Activated CD4-positive, alpha-beta memory T cell treated with anti-CD3 and anti-CD28 coated beads for 36 hours (primary cell): ENCODE measurements at regions of chr5 and their contacts with region 1.

Region 1: GRCh38 chr5:74974451-74975091 is 77.8 kb downstream of the GCNT4 start:
- DNase-seq: peak; percentile 53
- H3K4me3 Mint-ChIP-seq: peak overlapping the region; percentile 7
- H3K27ac Mint-ChIP-seq: peak overlapping the region; percentile 82
- H3K4me1 Mint-ChIP-seq: peaks cover 27% of the 10 kb centered on the region
- H3K27me3 Mint-ChIP-seq: peaks cover 1% of the 10 kb centered on the region

Region 2: DNA sequence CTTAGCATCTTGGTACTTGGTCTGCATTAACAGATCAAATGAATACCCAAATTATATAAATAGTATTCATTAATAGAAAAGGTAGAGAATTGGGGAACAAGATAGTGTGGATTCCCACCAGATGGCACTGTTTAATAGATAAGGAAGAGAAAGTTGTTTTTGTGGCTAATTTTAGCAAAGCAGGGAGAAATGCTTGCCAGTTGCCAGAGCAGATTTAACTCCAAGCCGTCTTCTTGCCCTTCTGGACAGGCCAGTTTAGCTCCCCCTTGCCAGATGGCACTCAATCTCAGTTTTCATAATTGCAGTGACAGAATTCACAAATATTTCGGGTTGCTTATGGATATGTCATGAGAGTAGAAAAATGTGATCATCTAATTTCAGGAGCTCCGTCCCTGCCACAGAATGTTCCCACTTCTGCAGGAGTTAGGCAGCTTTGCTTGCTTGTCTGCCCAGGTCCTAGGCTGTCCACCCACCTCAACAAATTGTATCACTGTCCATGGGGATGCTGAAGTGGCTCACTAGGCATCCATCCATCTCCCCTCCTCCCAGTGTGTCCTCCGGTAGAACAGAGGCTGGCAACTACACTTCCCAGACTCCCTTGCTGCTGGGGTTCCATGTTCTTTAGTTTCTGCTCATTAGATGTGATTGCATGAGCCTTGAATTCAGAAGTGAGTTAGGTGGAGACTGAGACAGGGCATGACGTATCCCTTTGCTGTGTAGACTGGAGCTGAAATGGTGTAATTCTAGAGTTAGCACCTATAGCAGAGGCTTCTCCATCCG is 301.4 kb before region 1 on chr5:
- CTCF ChIA-PET with region 1: no interaction called
- POLR2A ChIA-PET with region 1: no interaction called
- intact Hi-C with region 1: no loop called
- DNase-seq: no peak
- H3K4me3 Mint-ChIP-seq: no peak overlapping the region
- H3K27ac Mint-ChIP-seq: no peak overlapping the region
- H3K4me1 Mint-ChIP-seq: no peaks in the 10 kb centered on the region
- H3K27me3 Mint-ChIP-seq: peaks cover 9% of the 10 kb centered on the region

Region 3: DNA sequence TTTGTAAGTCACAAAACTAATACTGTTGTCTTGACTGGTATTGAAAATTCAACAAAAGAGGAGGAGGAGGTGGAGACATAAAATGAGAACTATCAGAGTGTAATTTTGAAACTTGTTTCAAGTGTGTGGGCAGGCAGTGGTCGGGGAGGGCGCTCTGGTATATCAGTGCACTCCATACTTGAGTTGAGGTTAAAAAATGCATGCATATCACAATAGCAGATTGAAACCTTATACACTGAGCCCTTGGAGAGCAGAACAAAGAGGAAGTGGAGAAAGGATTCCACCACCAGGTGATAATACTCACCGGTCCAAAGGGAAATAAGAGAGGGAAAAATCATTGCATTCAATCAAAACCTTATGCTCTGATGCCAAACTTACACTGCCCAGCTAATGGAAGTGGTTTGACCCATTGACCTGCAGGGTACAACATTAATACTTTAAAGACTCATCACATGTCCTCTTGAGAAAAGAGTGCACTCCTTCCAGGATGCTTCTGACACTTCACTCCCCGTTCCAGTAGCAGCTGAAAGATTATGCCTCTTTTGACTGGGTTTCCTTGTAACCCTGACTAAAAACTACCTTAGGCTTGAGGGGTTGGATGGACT is 28.9 kb before region 1 on chr5:
- CTCF ChIA-PET with region 1: no interaction called
- POLR2A ChIA-PET with region 1: no interaction called
- intact Hi-C with region 1: loop called (anchors 1 kb)
- DNase-seq: peak; percentile 74
- H3K4me3 Mint-ChIP-seq: no peak overlapping the region
- H3K27ac Mint-ChIP-seq: no peak overlapping the region
- H3K4me1 Mint-ChIP-seq: peaks cover 10% of the 10 kb centered on the region
- H3K27me3 Mint-ChIP-seq: peaks cover 19% of the 10 kb centered on the region

Region 4: GRCh38 chr5:74988273-74988983 is 13.9 kb after region 1 on chr5:
- CTCF ChIA-PET with region 1: no interaction called
- POLR2A ChIA-PET with region 1: no interaction called
- intact Hi-C with region 1: no loop called
- DNase-seq: no peak
- H3K4me3 Mint-ChIP-seq: no peak overlapping the region
- H3K27ac Mint-ChIP-seq: no peak overlapping the region
- H3K4me1 Mint-ChIP-seq: no peaks in the 10 kb centered on the region
- H3K27me3 Mint-ChIP-seq: no peaks in the 10 kb centered on the region